Right lobe of liver (tissue), 6 donors: ENCODE measurements at regions of chr5 and their contacts with region 1.

Region 1: GRCh38 chr5:54480296-54480695 is 24.8 kb downstream of the HSPB3 start:
- DNase-seq: no peak
- ATAC-seq: no peak
- H3K4me3 ChIP-seq: no peak overlapping the region
- H3K27ac ChIP-seq: no peak overlapping the region
- H3K4me1 ChIP-seq: no peaks in the 10 kb centered on the region
- H3K27me3 ChIP-seq: no peaks in the 10 kb centered on the region
- CTCF ChIP-seq: no peak
- POLR2A ChIP-seq: no peak

Region 2: GRCh38 chr5:54243473-54244080 is 236.7 kb before region 1 on chr5:
- intact Hi-C with region 1: loop called in 1 of 2 experiments (anchors 10 kb)
- DNase-seq: no peak
- ATAC-seq: peak; percentile 59 to 74 (median 70)
- H3K4me3 ChIP-seq: no peak overlapping the region
- H3K27ac ChIP-seq: no peak overlapping the region
- H3K4me1 ChIP-seq: no peaks in the 10 kb centered on the region
- H3K27me3 ChIP-seq: no peaks in the 10 kb centered on the region
- CTCF ChIP-seq: peak; percentile 67 to 80 (median 70)
- POLR2A ChIP-seq: no peak

Region 3: GRCh38 chr5:54637654-54638053 is 157.4 kb after region 1 on chr5:
- intact Hi-C with region 1: no loop called
- DNase-seq: no peak
- ATAC-seq: no peak
- H3K4me3 ChIP-seq: no peak overlapping the region
- H3K27ac ChIP-seq: no peak overlapping the region
- H3K4me1 ChIP-seq: peaks cover 0 to 5% (median 0%) of the 10 kb centered on the region in 4 donors
- H3K27me3 ChIP-seq: no peaks in the 10 kb centered on the region
- CTCF ChIP-seq: no peak
- POLR2A ChIP-seq: no peak